Mammary epithelial cell (primary cell): ENCODE measurements at regions of chr9 and their contacts with region 1.

Region 1: DNA sequence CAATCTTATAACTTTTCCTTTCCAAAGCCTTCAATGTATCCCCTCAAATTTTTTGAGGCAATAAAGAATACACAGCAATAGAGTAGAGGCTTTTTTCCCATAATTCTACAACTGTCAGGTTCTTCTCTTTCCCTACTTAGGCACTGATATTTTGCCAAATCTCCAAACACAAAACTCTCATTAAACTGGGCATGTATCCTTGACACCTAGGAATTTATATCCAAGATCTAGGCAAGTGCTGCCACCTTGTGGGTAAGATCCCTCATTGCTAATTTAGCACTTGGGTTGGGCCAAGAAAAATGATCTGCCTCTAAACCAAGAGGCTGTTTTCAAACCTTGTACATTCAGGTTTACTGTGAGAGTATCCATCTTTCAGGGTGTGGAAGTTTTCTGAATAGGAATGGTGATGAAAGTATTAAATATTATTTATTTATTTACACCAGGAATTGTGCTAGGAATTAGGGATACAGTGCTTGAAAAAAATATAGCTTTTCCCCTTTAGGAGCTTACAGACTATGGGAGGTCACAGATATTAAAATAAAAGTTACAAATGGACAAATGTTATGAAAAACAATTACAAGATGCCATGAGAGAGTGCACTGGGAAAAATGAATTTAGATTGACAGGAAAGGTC is 17.6 kb downstream of the TSTD2 start:
- DNase-seq: peak; percentile 35
- H3K4me3 ChIP-seq: no peak overlapping the region
- H3K27ac ChIP-seq: no peak overlapping the region
- H3K4me1 ChIP-seq: no peaks in the 10 kb centered on the region
- H3K27me3 ChIP-seq: no peaks in the 10 kb centered on the region
- CTCF ChIP-seq: peak; percentile 76 to 85

Region 2: GRCh38 chr9:97109194-97109811 is 506.3 kb before region 1 on chr9:
- CTCF ChIA-PET with region 1: no interaction called
- dilution Hi-C with region 1: no loop called
- in situ Hi-C with region 1: no loop called
- intact Hi-C with region 1: loop called (anchors 10 kb)
- DNase-seq: peak; percentile 69
- H3K4me3 ChIP-seq: no peak overlapping the region
- H3K27ac ChIP-seq: no peak overlapping the region
- H3K4me1 ChIP-seq: peaks cover 4% of the 10 kb centered on the region
- H3K27me3 ChIP-seq: no peaks in the 10 kb centered on the region
- CTCF ChIP-seq: peak; percentile 63 to 95

Region 3: GRCh38 chr9:97271292-97271691 is 344.3 kb before region 1 on chr9:
- CTCF ChIA-PET with region 1: interaction called, 14 read pairs
- dilution Hi-C with region 1: no loop called
- in situ Hi-C with region 1: no loop called
- intact Hi-C with region 1: no loop called
- DNase-seq: no peak
- H3K4me3 ChIP-seq: no peak overlapping the region
- H3K27ac ChIP-seq: no peak overlapping the region
- H3K4me1 ChIP-seq: no peaks in the 10 kb centered on the region
- H3K27me3 ChIP-seq: no peaks in the 10 kb centered on the region
- CTCF ChIP-seq: no peak

Region 4: DNA sequence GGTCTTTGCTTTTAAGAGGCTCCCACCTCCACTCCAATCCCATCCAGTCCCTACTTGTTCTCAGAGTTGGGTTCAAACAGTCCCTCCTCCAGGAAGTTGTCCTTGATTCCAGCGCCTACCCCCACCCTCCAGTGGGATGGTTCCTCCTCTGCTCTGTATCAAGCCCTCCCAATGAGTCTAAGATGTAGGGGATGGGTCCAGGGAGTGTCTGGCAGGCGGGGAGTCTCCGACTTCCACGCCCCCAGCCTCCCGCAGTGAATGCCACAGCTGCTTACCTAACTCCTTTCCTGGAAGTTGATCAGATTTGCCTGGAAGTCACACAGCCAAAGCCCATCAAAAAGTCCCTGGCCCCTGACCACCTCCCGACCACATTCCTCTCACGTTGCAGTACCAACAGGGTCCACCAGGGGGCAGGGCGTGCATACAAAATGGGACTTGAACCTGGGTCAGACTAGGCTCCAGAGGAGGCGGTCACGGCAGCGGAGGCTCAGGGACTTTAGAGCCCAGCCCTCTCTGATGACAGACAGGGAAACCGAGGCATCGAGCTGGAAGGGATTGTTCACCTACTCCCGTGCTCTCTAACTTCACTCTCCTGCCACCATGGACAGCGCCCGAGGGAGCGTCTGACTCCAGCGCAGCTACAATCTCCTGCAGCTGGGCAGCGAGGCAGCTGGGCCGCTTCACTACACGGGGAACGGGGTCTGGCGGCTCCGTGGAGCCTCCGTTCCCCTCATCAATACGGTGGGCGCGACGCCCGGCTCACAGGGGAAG is 228.6 kb before region 1 on chr9:
- CTCF ChIA-PET with region 1: no interaction called
- dilution Hi-C with region 1: no loop called
- in situ Hi-C with region 1: no loop called
- intact Hi-C with region 1: loop called (anchors 1 kb)
- DNase-seq: peak; percentile 66
- H3K4me3 ChIP-seq: no peak overlapping the region
- H3K27ac ChIP-seq: no peak overlapping the region
- H3K4me1 ChIP-seq: no peaks in the 10 kb centered on the region
- H3K27me3 ChIP-seq: peaks cover 3% of the 10 kb centered on the region
- CTCF ChIP-seq: peak; percentile 99

Region 5: GRCh38 chr9:97411789-97412625 is 203.5 kb before region 1 on chr9 and contains the start of gene TDRD7:
- CTCF ChIA-PET with region 1: no interaction called
- dilution Hi-C with region 1: no loop called
- in situ Hi-C with region 1: no loop called
- intact Hi-C with region 1: loop called (anchors 1 kb)
- DNase-seq: peak; percentile 63
- H3K4me3 ChIP-seq: peak within 1 kb of the TSS; percentile 75 to 80 (median 77)
- H3K27ac ChIP-seq: peak within 1 kb of the TSS; percentile 39
- H3K4me1 ChIP-seq: peaks cover 10% of the 10 kb centered on the region
- H3K27me3 ChIP-seq: no peaks in the 10 kb centered on the region
- CTCF ChIP-seq: peak; percentile 89 to 95
- total RNA-seq, gene TDRD7: 8.5 to 8.9 TPM

Region 6: GRCh38 chr9:97468658-97469448 is 146.7 kb before region 1 on chr9:
- CTCF ChIA-PET with region 1: interaction called, 7 read pairs
- dilution Hi-C with region 1: no loop called
- in situ Hi-C with region 1: loop called in 1 of 2 experiments (anchors 5 kb)
- intact Hi-C with region 1: loop called (anchors 1 kb)
- DNase-seq: peak; percentile 13
- H3K4me3 ChIP-seq: no peak overlapping the region
- H3K27ac ChIP-seq: no peak overlapping the region
- H3K4me1 ChIP-seq: no peaks in the 10 kb centered on the region
- H3K27me3 ChIP-seq: no peaks in the 10 kb centered on the region
- CTCF ChIP-seq: peak; percentile 62 to 85

Region 7: DNA sequence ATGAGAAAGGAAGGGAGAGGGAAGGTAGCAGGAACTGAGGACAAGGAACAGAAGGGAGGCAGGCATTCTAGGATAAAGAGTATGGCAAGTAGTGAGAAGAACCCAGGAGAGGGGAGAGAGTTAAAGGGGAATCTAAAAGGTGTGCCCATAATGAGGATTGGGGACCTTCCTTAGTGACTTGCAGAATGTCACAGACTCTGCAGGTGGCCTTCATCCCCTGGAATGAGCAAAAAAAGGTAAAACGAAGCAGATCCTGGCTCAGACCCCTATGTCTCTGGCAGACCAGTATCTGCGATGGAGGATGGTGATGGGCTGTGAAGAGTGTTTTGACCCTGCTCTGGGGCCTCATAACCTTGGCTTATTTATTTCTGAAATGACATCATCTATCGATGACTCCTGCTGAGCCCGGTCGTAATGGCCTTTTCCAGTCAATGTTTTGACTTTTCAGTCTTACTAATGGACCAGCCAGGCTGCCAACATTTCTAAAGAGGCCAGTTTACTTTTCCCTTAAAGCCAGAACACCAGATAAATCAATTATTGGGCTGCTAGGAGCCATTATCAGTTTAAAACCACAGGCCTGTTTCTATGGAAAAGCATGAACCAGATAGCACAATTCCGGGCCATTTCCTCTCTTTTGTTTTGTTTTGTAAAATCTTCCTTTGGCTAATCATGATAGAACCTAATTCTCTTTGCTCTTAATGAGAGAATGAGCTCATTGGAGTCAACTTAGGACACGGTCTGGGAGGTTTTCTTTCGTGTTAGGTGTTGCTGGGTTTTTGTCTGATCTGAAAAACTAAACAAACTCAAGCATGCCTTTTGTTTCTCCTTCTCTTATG is 111.0 kb before region 1 on chr9:
- CTCF ChIA-PET with region 1: no interaction called
- dilution Hi-C with region 1: loop called (anchors 5 kb)
- in situ Hi-C with region 1: no loop called
- intact Hi-C with region 1: no loop called
- DNase-seq: no peak
- H3K4me3 ChIP-seq: no peak overlapping the region
- H3K27ac ChIP-seq: no peak overlapping the region
- H3K4me1 ChIP-seq: peaks cover 13% of the 10 kb centered on the region
- H3K27me3 ChIP-seq: peaks cover 19% of the 10 kb centered on the region
- CTCF ChIP-seq: no peak